Endothelial cell of umbilical vein (primary cell): ENCODE measurements at regions of chr4 and their contacts with region 1.

Region 1: GRCh38 chr4:87235020-87235671 is 14.7 kb upstream of the KLHL8 start:
- DNase-seq: no peak
- H3K4me3 ChIP-seq: peak overlapping the region in 2 of 3 experiments; percentile 74 to 96
- H3K27ac ChIP-seq: no peak overlapping the region
- H3K4me1 ChIP-seq: peaks cover 2% of the 10 kb centered on the region
- H3K27me3 ChIP-seq: peaks cover 0 to 6% of the 10 kb centered on the region in 2 experiments
- CTCF ChIP-seq: no peak
- POLR2A ChIP-seq: no peak

Region 2: DNA sequence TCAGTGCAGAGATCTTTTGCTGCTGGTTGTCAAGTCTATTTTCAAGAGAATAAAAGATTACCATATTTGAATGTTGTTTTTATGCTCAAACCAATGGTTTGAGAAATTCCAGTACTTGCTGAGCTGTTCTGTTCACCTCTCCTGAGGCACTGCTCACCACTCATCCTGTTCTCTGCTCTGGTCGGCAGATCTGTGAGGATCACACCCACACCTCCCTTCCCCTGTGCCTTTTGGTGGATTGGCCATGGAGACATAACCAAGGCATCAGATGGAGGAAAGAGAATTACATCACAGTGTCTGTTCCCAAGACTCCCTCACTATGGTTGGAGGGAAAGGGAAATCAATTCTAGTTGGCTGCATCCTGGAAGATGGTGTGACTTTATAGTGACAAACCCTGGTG is 1368.6 kb before region 1 on chr4:
- CTCF ChIA-PET with region 1: no interaction called
- POLR2A ChIA-PET with region 1: no interaction called
- dilution Hi-C with region 1: no loop called
- intact Hi-C with region 1: no loop called
- DNase-seq: no peak
- H3K4me3 ChIP-seq: no peak overlapping the region
- H3K27ac ChIP-seq: no peak overlapping the region
- H3K4me1 ChIP-seq: peaks cover 29% of the 10 kb centered on the region
- H3K27me3 ChIP-seq: no peaks in the 10 kb centered on the region
- CTCF ChIP-seq: no peak
- POLR2A ChIP-seq: no peak

Region 3: DNA sequence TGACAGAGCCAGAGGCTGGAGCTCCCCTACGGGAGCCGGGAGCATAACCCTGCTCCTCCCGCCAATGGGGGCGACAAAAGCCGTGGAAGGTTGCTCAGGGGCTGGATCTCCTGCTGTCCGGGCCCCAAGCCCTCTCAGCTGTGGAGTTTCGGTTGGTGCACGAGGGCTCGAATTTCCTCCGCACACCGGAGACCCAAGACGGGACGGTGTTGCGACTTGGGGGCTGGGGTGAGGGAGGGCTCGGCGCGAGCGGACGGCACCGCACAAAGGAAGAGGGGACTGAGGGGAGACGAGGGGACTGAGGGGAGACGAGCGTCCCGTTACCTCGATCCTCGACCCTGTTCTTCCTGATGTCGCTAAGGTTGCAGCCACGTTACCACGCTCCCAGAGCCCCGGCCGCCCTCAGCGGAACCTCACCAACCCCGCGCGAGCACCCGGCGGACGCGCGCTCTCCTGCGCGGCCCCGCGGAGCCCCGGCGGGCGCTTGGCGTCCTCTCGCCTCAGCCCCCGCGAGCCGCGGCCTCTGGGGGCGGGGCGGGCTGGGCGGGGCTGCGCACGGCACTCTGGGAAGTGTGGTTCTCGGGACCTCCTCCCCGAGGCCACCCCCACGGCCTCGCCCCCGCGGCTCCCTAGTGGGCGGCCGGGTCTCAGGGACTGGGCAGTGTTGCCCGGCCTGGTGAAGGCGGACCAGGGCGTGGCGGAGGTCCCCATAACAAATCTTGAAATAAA is 14.9 kb before region 1 on chr4 and contains the start of gene KLHL8:
- CTCF ChIA-PET with region 1: interaction called, 13 read pairs
- POLR2A ChIA-PET with region 1: no interaction called
- dilution Hi-C with region 1: no loop called
- intact Hi-C with region 1: loop called (anchors 1 kb)
- DNase-seq: peak; percentile 88
- H3K4me3 ChIP-seq: peak within 1 kb of the TSS; percentile 82 to 88 (median 86)
- H3K27ac ChIP-seq: peak within 1 kb of the TSS; percentile 50
- H3K4me1 ChIP-seq: peaks cover 10% of the 10 kb centered on the region
- H3K27me3 ChIP-seq: no peaks in the 10 kb centered on the region
- CTCF ChIP-seq: peak; percentile 0 to 14
- POLR2A ChIP-seq: peak; percentile 84
- total RNA-seq, gene KLHL8: 9.0 and 9.6 TPM in 2 replicates